MCF 10A (cell line): ENCODE measurements at regions of chr1 and their contacts with region 1.

Region 1: DNA sequence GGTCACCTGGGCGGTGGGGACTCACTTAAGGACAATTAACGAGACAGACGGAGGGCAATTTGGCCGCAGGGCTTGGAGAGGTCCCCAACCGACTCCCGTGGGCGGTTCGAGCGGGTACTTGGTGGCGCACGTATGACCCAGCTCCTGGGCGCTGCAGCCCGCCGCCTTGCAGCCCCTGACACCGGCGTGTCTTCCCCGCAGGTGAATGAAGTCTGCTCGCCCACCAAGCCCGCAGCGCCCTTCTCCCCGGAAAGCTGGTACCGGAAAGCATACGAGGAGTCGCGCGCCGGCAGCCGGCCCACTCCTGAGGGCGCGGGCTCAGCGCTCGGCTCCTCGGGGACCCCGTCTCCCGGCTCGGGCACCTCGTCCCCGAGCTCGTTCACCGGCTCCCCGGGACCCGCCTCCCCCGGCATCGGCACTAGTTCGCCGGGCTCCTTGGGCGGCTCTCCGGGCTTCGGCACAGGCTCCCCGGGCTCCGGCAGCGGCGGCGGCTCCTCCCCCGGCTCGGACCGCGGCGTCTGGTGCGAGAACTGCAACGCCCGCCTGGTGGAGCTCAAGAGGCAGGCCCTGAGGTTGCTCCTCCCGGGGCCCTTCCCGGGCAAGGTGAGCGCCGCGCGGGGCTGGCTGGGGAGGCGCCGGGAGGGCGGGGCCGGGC is 1.4 kb downstream of the KIF26B start:
- DNase-seq: peak; percentile 93
- H3K4me3 Mint-ChIP-seq: peak overlapping the region; percentile 79
- H3K27ac Mint-ChIP-seq: no peak overlapping the region
- H3K4me1 Mint-ChIP-seq: peaks cover 17% of the 10 kb centered on the region
- H3K27me3 Mint-ChIP-seq: peaks cover 38% of the 10 kb centered on the region
- CTCF ChIP-seq: peak; percentile 99

Region 2: GRCh38 chr1:245091818-245092637 is 64.2 kb before region 1 on chr1:
- CTCF ChIA-PET with region 1: interaction called, 14 read pairs
- POLR2A ChIA-PET with region 1: interaction called, 3 read pairs
- intact Hi-C with region 1: no loop called
- DNase-seq: peak; percentile 99
- H3K4me3 Mint-ChIP-seq: no peak overlapping the region
- H3K27ac Mint-ChIP-seq: no peak overlapping the region
- H3K4me1 Mint-ChIP-seq: peaks cover under 1% of the 10 kb centered on the region
- H3K27me3 Mint-ChIP-seq: no peaks in the 10 kb centered on the region
- CTCF ChIP-seq: no peak

Region 3: GRCh38 chr1:245277276-245277675 is 121.1 kb after region 1 on chr1:
- CTCF ChIA-PET with region 1: interaction called, 3 read pairs
- POLR2A ChIA-PET with region 1: no interaction called
- intact Hi-C with region 1: loop called (anchors 5 kb)
- DNase-seq: peak; percentile 31
- H3K4me3 Mint-ChIP-seq: no peak overlapping the region
- H3K27ac Mint-ChIP-seq: no peak overlapping the region
- H3K4me1 Mint-ChIP-seq: peaks cover 4% of the 10 kb centered on the region
- H3K27me3 Mint-ChIP-seq: peaks cover 37% of the 10 kb centered on the region
- CTCF ChIP-seq: peak; percentile 11

Region 4: DNA sequence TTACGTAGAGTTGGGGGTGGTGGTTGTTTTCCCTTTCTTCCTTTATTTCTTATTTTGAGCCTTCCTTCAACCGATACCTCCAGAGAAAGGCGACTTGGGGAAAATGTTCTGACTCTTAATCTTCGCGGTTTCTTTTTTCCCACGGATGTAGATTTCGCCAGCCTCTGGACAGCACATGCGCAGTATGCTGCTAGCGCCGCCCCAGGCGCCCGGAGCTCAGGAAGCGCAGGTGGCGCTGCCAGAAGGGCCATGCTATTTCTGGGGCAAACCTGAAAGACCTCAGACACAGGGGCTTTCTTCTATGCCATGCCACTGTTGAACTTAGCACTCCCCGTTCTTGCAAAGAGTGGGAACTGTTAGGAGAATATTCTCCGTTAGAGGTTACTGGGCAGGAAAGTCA is 390.7 kb after region 1 on chr1:
- CTCF ChIA-PET with region 1: interaction called, 10 read pairs
- POLR2A ChIA-PET with region 1: no interaction called
- intact Hi-C with region 1: no loop called
- DNase-seq: peak; percentile 67
- H3K4me3 Mint-ChIP-seq: peak overlapping the region; percentile 48
- H3K27ac Mint-ChIP-seq: no peak overlapping the region
- H3K4me1 Mint-ChIP-seq: peaks cover 6% of the 10 kb centered on the region
- H3K27me3 Mint-ChIP-seq: peaks cover 63% of the 10 kb centered on the region
- CTCF ChIP-seq: no peak

Region 5: DNA sequence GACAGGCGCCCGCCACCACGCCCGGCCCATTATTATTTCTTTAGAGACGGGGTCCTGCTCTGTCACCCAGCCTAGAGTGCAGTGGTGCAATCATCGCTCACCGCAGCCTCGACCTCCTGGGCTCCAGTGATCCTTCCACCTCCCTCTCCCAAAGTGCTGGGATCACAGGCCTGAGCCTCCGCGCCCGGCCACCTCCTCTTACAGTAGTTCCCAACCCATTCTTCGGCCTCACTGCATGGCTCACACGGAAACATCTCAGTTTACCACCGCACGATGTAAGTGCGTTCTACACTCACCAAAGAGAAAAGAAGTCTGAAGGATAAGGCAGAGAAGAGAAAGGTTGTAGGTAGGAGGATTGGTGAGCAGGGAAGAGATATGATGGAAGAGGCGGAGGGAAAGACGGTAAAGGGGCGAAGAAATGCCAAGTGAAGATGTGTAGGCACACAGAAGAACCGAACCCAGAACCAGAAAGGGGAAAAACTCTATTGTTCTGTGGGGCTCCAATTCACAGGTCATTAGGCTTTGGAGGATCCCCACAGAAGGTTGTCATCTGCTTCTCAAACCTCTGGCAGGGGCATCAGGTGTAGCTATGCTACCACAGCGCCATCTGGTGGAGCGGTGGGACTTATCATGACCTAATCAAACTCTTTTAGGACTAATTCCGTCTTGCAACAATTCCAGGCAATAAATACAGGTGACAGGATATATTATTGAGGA is 846.7 kb after region 1 on chr1:
- CTCF ChIA-PET with region 1: interaction called, 131 read pairs
- POLR2A ChIA-PET with region 1: interaction called, 12 read pairs
- intact Hi-C with region 1: loop called (anchors 1 kb)
- DNase-seq: peak; percentile 96
- H3K4me3 Mint-ChIP-seq: no peak overlapping the region
- H3K27ac Mint-ChIP-seq: no peak overlapping the region
- H3K4me1 Mint-ChIP-seq: peaks cover 53% of the 10 kb centered on the region
- H3K27me3 Mint-ChIP-seq: no peaks in the 10 kb centered on the region
- CTCF ChIP-seq: peak; percentile 99

Region 6: DNA sequence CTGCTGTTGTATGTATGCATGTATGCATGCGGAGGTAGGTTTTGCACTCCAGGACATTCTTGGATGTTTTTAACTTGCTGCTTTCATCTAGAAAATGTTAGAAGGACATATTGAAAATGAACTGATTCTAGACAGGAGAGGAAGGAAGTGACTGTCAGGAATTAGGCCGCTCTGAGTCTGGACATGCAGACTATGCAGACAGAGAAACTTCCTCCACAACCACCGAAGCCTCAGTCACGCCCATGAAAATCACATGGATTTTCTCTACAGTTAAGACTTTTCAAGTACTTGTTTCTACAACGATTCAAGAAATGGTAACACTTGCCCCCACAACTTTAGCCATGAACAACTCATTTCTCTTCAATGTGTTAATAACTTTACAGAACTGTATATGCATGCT is 1139.8 kb after region 1 on chr1:
- CTCF ChIA-PET with region 1: interaction called, 12 read pairs
- POLR2A ChIA-PET with region 1: no interaction called
- intact Hi-C with region 1: no loop called
- DNase-seq: no peak
- H3K4me3 Mint-ChIP-seq: no peak overlapping the region
- H3K27ac Mint-ChIP-seq: no peak overlapping the region
- H3K4me1 Mint-ChIP-seq: peaks cover 16% of the 10 kb centered on the region
- H3K27me3 Mint-ChIP-seq: no peaks in the 10 kb centered on the region
- CTCF ChIP-seq: no peak

Region 7: GRCh38 chr1:246482805-246483568 is 1326.8 kb after region 1 on chr1:
- CTCF ChIA-PET with region 1: interaction called, 10 read pairs
- POLR2A ChIA-PET with region 1: no interaction called
- intact Hi-C with region 1: no loop called
- DNase-seq: no peak
- H3K4me3 Mint-ChIP-seq: no peak overlapping the region
- H3K27ac Mint-ChIP-seq: no peak overlapping the region
- H3K4me1 Mint-ChIP-seq: peaks cover 14% of the 10 kb centered on the region
- H3K27me3 Mint-ChIP-seq: no peaks in the 10 kb centered on the region
- CTCF ChIP-seq: no peak